B cell (primary cell): ENCODE measurements at regions of chr19 and their contacts with region 1.

Region 1: DNA sequence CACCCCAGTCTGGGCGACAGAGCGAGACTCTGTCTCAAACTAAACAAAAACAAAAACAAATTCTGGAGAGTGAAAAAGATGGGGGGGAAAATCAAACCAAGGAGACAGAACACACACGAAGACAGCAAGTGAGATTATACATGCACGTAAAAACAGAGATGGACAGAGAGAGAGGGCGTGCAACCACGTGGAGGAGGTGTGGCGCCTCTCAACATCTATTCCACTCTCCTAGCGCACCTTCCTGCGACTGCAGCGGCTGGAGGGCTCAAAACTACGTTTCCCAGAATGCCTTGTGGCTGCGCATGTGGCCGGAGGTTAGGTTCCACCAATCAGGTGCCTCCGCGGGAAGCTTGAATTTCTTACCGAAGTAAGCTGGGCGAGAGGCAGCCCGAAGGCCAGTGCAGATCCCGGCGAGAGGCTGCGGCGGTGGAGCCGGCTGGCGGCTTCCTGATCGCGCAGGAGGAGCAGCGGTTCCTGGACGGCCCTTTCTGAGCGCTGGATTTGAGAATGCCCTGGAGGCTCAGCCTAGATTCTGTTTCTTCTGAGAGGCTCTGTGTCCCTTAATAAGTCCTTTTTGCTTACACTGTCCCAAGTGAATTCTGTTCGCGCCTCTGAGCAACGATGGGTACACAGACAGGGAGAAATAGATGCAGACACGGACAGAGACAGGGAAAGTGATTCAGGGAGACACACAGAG is 13.1 kb upstream of the NANOS2 start:
- DNase-seq: peak; percentile 93
- ATAC-seq: peak; percentile 99
- H3K4me3 ChIP-seq: no peak overlapping the region
- H3K4me3 Mint-ChIP-seq: peak overlapping the region; percentile 32
- H3K27ac ChIP-seq: no peak overlapping the region
- H3K27ac Mint-ChIP-seq: no peak overlapping the region
- H3K4me1 ChIP-seq: peaks cover 7 to 8% of the 10 kb centered on the region in 2 donors
- H3K4me1 Mint-ChIP-seq: peaks cover 8% of the 10 kb centered on the region
- H3K27me3 ChIP-seq: peaks cover 0 to 8% (median 1%) of the 10 kb centered on the region in 4 experiments
- H3K27me3 Mint-ChIP-seq: peaks cover 11% of the 10 kb centered on the region
- CTCF ChIP-seq: no peak

Region 2: GRCh38 chr19:45908956-45909355 is 18.8 kb before region 1 on chr19:
- CTCF ChIA-PET with region 1: no interaction called
- POLR2A ChIA-PET with region 1: no interaction called
- intact Hi-C with region 1: no loop called
- DNase-seq: no peak
- ATAC-seq: no peak
- H3K4me3 ChIP-seq: no peak overlapping the region
- H3K4me3 Mint-ChIP-seq: no peak overlapping the region
- H3K27ac ChIP-seq: no peak overlapping the region
- H3K27ac Mint-ChIP-seq: no peak overlapping the region
- H3K4me1 ChIP-seq: no peaks in the 10 kb centered on the region
- H3K4me1 Mint-ChIP-seq: peaks cover under 1% of the 10 kb centered on the region
- H3K27me3 ChIP-seq: peaks cover 0 to 21% (median 2%) of the 10 kb centered on the region in 4 experiments
- H3K27me3 Mint-ChIP-seq: peaks cover 33% of the 10 kb centered on the region
- CTCF ChIP-seq: no peak

Region 3: DNA sequence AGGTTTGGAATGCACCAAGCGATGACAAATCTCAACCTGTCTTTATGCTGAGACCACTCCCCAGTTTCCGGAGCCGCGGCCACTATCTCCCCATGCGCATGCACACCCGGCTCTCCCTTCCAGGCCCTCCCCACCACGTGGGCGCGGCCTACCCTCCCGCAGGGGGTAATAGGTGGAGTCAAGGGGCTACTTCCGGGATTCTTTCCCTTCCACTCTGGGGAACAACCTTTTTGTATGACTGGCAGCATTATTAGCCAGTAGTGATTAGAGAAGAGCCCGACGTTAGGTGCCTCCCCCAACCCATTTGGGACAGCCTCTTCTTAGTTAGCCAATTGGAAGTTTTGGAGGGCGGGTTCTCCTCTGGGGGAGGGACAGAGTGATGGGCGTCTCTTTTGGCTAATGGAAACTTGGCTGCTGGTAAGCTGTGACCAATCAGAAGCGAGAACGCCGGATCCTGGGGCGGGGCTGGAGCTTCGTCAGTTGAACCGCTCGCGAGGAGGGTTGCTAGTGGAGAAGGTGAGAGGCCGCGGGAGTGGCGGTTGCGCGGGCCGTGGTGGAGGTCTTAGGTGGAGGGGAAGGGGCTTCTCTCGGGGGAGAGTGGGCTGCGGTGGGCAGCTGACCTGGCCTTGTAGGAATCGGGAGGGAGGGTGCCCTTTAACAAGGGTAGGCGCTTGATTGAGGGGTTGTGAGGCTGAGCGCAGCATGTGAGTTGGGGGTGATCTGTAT is 67.4 kb after region 1 on chr19 and contains the start of gene CCDC61:
- CTCF ChIA-PET with region 1: no interaction called
- POLR2A ChIA-PET with region 1: no interaction called
- intact Hi-C with region 1: loop called (anchors 2 kb)
- DNase-seq: peak; percentile 99
- ATAC-seq: peak; percentile 93
- H3K4me3 ChIP-seq: peak within 1 kb of the TSS; percentile 71 to 92 (median 78)
- H3K4me3 Mint-ChIP-seq: peak within 1 kb of the TSS; percentile 58
- H3K27ac ChIP-seq: peak within 1 kb of the TSS; percentile 55 to 84
- H3K27ac Mint-ChIP-seq: no peak within 1 kb of the TSS
- H3K4me1 ChIP-seq: peaks cover 19 to 21% of the 10 kb centered on the region in 2 donors
- H3K4me1 Mint-ChIP-seq: peaks cover 27% of the 10 kb centered on the region
- H3K27me3 ChIP-seq: peaks cover 0 to 9% (median 5%) of the 10 kb centered on the region in 4 experiments
- H3K27me3 Mint-ChIP-seq: peaks cover 21% of the 10 kb centered on the region
- CTCF ChIP-seq: no peak
- total RNA-seq, gene CCDC61: 30.1 and 37.0 TPM in 2 replicates